CD4-positive, alpha-beta memory T cell (primary cell): ENCODE measurements at regions of chr2 and their contacts with region 1.

Region 1: GRCh38 chr2:37600735-37601134 is 70.7 kb downstream of the CDC42EP3 start:
- DNase-seq: peak in 1 of 5 donors; percentile 19
- H3K4me3 ChIP-seq: peak overlapping the region; percentile 54 to 80
- H3K4me3 Mint-ChIP-seq: peak overlapping the region; percentile 91 to 99 (median 96)
- H3K27ac ChIP-seq: peak overlapping the region; percentile 79
- H3K27ac Mint-ChIP-seq: peak overlapping the region; percentile 94 to 99 (median 99)
- H3K4me1 ChIP-seq: peaks cover 53% of the 10 kb centered on the region
- H3K4me1 Mint-ChIP-seq: peaks cover 37 to 61% (median 45%) of the 10 kb centered on the region in 4 donors
- H3K27me3 ChIP-seq: no peaks in the 10 kb centered on the region
- H3K27me3 Mint-ChIP-seq: no peaks in the 10 kb centered on the region

Region 2: DNA sequence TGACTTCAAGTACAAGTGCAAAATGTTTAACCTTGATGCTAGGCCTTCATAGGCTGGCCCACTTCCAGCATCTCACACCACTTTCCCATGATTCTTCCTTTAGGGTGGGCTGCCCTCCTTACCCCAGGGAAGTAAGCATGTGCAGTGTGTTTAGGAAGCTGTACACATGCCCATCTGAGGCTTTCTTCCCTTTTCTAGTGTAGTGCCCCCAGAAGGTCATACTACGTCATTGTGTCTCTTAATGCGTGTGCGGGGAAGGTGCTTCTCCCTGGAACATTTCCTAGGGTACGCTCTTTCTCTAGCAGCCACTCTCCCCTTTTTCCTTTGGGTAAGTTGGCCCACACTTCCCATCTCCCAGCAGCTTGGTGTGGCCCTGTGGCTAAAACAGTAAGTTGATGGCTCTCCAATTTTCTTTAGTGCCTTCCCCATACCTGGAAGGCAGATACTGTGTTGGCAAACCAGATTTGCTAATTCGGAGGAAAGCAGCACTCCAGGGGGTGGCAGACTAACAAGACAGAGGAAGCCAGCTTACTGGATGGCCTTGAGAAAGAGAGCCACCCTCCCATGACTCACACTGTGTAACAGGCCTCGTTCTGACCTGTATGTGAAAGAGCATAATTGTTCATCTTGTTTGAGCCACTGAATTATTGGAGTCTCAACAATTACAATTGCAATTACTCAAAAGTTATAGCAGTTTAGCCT is 411.1 kb before region 1 on chr2:
- CTCF ChIA-PET with region 1: no interaction called
- POLR2A ChIA-PET with region 1: no interaction called
- intact Hi-C with region 1: no loop called
- DNase-seq: no peak
- H3K4me3 ChIP-seq: no peak overlapping the region
- H3K4me3 Mint-ChIP-seq: no peak overlapping the region
- H3K27ac ChIP-seq: no peak overlapping the region
- H3K27ac Mint-ChIP-seq: no peak overlapping the region
- H3K4me1 ChIP-seq: no peaks in the 10 kb centered on the region
- H3K4me1 Mint-ChIP-seq: no peaks in the 10 kb centered on the region
- H3K27me3 ChIP-seq: no peaks in the 10 kb centered on the region
- H3K27me3 Mint-ChIP-seq: peaks cover 7 to 9% of the 10 kb centered on the region in 2 donors

Region 3: DNA sequence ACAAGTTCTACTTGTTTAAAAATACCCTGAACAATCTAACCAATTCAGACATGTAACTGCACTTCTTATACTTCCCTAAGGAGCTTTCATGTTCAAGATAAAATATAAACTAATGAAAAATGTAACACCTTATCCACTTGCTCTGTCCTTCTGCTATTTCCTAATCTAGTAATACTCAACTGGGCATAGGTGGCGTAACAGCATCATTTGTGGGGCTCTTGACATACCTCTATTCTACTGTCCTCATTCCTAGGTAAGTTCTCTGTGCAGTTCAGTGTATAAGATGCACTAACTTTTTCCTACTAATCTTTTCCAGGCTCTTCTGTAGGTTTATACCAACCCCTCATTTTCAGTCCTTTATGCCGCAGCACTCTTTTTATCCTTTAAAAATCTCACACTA is 312.8 kb before region 1 on chr2:
- CTCF ChIA-PET with region 1: no interaction called
- POLR2A ChIA-PET with region 1: no interaction called
- intact Hi-C with region 1: no loop called
- DNase-seq: peak in 1 of 5 donors; percentile 1
- H3K4me3 ChIP-seq: no peak overlapping the region
- H3K4me3 Mint-ChIP-seq: no peak overlapping the region
- H3K27ac ChIP-seq: no peak overlapping the region
- H3K27ac Mint-ChIP-seq: peak overlapping the region in 2 of 7 donors; percentile 3 to 30
- H3K4me1 ChIP-seq: no peaks in the 10 kb centered on the region
- H3K4me1 Mint-ChIP-seq: no peaks in the 10 kb centered on the region
- H3K27me3 ChIP-seq: no peaks in the 10 kb centered on the region
- H3K27me3 Mint-ChIP-seq: no peaks in the 10 kb centered on the region

Region 4: GRCh38 chr2:37537316-37537715 is 63.4 kb before region 1 on chr2:
- CTCF ChIA-PET with region 1: interaction called, 4 read pairs
- POLR2A ChIA-PET with region 1: interaction called, 10 read pairs
- intact Hi-C with region 1: no loop called
- DNase-seq: no peak
- H3K4me3 ChIP-seq: no peak overlapping the region
- H3K4me3 Mint-ChIP-seq: no peak overlapping the region
- H3K27ac ChIP-seq: no peak overlapping the region
- H3K27ac Mint-ChIP-seq: no peak overlapping the region
- H3K4me1 ChIP-seq: no peaks in the 10 kb centered on the region
- H3K4me1 Mint-ChIP-seq: peaks cover 0 to 5% (median under 1%) of the 10 kb centered on the region in 4 donors
- H3K27me3 ChIP-seq: no peaks in the 10 kb centered on the region
- H3K27me3 Mint-ChIP-seq: peaks cover 0 to 1% of the 10 kb centered on the region in 2 donors

Region 5: GRCh38 chr2:37585982-37586621 is 14.6 kb before region 1 on chr2:
- CTCF ChIA-PET with region 1: interaction called, 45 read pairs
- POLR2A ChIA-PET with region 1: interaction called, 322 read pairs
- intact Hi-C with region 1: loop called (anchors 1 kb)
- DNase-seq: peak; percentile 80 to 93 (median 86)
- H3K4me3 ChIP-seq: peak overlapping the region in 1 of 2 donors; percentile 7
- H3K4me3 Mint-ChIP-seq: peak overlapping the region; percentile 55 to 96 (median 80)
- H3K27ac ChIP-seq: peak overlapping the region; percentile 76
- H3K27ac Mint-ChIP-seq: peak overlapping the region; percentile 87 to 98 (median 94)
- H3K4me1 ChIP-seq: peaks cover 95% of the 10 kb centered on the region
- H3K4me1 Mint-ChIP-seq: peaks cover 77 to 95% (median 88%) of the 10 kb centered on the region in 4 donors
- H3K27me3 ChIP-seq: no peaks in the 10 kb centered on the region
- H3K27me3 Mint-ChIP-seq: no peaks in the 10 kb centered on the region

Region 6: GRCh38 chr2:37635504-37636380 is 35.0 kb after region 1 on chr2:
- CTCF ChIA-PET with region 1: interaction called, 14 read pairs
- POLR2A ChIA-PET with region 1: interaction called, 20 read pairs
- intact Hi-C with region 1: loop called (anchors 2 kb)
- DNase-seq: peak; percentile 70 to 94 (median 78)
- H3K4me3 ChIP-seq: peak overlapping the region in 1 of 2 donors; percentile 22
- H3K4me3 Mint-ChIP-seq: peak overlapping the region in 7 of 8 donors; percentile 54 to 80 (median 66)
- H3K27ac ChIP-seq: peak overlapping the region; percentile 72
- H3K27ac Mint-ChIP-seq: peak overlapping the region; percentile 92 to 98 (median 94)
- H3K4me1 ChIP-seq: peaks cover 76% of the 10 kb centered on the region
- H3K4me1 Mint-ChIP-seq: peaks cover 68 to 90% (median 75%) of the 10 kb centered on the region in 4 donors
- H3K27me3 ChIP-seq: no peaks in the 10 kb centered on the region
- H3K27me3 Mint-ChIP-seq: no peaks in the 10 kb centered on the region

Region 7: DNA sequence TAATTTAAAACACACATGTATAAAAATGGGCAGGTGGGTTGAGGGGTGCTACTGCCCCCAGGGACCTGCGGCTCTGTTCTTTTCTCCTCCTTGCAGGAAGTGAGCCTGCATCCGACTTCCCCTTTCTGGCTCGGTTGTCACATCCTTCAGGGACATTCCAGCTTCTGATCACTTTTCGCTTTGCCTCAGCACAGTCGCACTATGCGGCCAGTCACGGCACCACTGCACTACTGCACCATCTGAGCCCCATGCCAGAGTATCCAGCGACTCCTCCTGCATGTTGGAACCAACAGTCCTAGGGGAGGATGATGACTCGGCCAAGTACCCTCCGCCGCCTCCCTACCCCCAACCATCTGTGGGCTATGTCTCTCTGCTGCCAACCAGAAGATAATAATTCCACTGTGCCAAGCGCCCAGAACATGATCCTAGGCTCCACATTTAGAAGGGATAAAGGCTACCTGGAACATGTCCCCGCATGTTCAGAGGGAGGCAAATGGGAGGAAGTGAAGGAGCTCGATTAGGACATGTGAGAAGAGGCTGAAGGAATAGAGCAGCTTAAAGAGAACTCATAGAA is 53.2 kb after region 1 on chr2:
- CTCF ChIA-PET with region 1: interaction called, 34 read pairs
- POLR2A ChIA-PET with region 1: interaction called, 129 read pairs
- intact Hi-C with region 1: no loop called
- DNase-seq: no peak
- H3K4me3 ChIP-seq: no peak overlapping the region
- H3K4me3 Mint-ChIP-seq: peak overlapping the region in 7 of 8 donors; percentile 48 to 76 (median 70)
- H3K27ac ChIP-seq: peak overlapping the region; percentile 63
- H3K27ac Mint-ChIP-seq: peak overlapping the region; percentile 78 to 96 (median 89)
- H3K4me1 ChIP-seq: peaks cover 96% of the 10 kb centered on the region
- H3K4me1 Mint-ChIP-seq: peaks cover 80 to 98% (median 88%) of the 10 kb centered on the region in 4 donors
- H3K27me3 ChIP-seq: no peaks in the 10 kb centered on the region
- H3K27me3 Mint-ChIP-seq: no peaks in the 10 kb centered on the region

Region 8: GRCh38 chr2:37683921-37684780 is 83.4 kb after region 1 on chr2:
- CTCF ChIA-PET with region 1: interaction called, 5 read pairs
- POLR2A ChIA-PET with region 1: interaction called, 13 read pairs
- intact Hi-C with region 1: no loop called
- DNase-seq: peak; percentile 43 to 58 (median 54)
- H3K4me3 ChIP-seq: no peak overlapping the region
- H3K4me3 Mint-ChIP-seq: peak overlapping the region in 7 of 8 donors; percentile 10 to 84 (median 65)
- H3K27ac ChIP-seq: no peak overlapping the region
- H3K27ac Mint-ChIP-seq: peak overlapping the region; percentile 69 to 87 (median 76)
- H3K4me1 ChIP-seq: peaks cover 27% of the 10 kb centered on the region
- H3K4me1 Mint-ChIP-seq: peaks cover 18 to 31% (median 24%) of the 10 kb centered on the region in 4 donors
- H3K27me3 ChIP-seq: no peaks in the 10 kb centered on the region
- H3K27me3 Mint-ChIP-seq: no peaks in the 10 kb centered on the region